Ascending aorta (tissue), 2 donors: ENCODE measurements at regions of chr16 and their contacts with region 1.

Region 1: GRCh38 chr16:27235055-27235937 is 32.0 kb downstream of the KDM8 start:
- DNase-seq: peak; percentile 71 to 88
- H3K4me3 ChIP-seq: peak overlapping the region in 1 of 2 donors; percentile 0
- H3K27ac ChIP-seq: peak overlapping the region; percentile 58 to 68
- H3K4me1 ChIP-seq: peaks cover 0 to 11% of the 10 kb centered on the region in 2 donors
- H3K27me3 ChIP-seq: no peaks in the 10 kb centered on the region
- CTCF ChIP-seq: peak; percentile 71 to 82 (median 74)

Region 2: GRCh38 chr16:27217256-27217655 is 18.0 kb before region 1 on chr16:
- intact Hi-C with region 1: no loop called
- DNase-seq: no peak
- H3K4me3 ChIP-seq: peak overlapping the region in 1 of 2 donors; percentile 37
- H3K27ac ChIP-seq: peak overlapping the region; percentile 12 to 49
- H3K4me1 ChIP-seq: no peaks in the 10 kb centered on the region
- H3K27me3 ChIP-seq: no peaks in the 10 kb centered on the region
- CTCF ChIP-seq: no peak

Region 3: GRCh38 chr16:27273670-27274423 is 38.6 kb after region 1 on chr16:
- intact Hi-C with region 1: loop called (anchors 5 kb)
- DNase-seq: no peak
- H3K4me3 ChIP-seq: no peak overlapping the region
- H3K27ac ChIP-seq: no peak overlapping the region
- H3K4me1 ChIP-seq: peaks cover 0 to 7% of the 10 kb centered on the region in 2 donors
- H3K27me3 ChIP-seq: no peaks in the 10 kb centered on the region
- CTCF ChIP-seq: no peak

Region 4: DNA sequence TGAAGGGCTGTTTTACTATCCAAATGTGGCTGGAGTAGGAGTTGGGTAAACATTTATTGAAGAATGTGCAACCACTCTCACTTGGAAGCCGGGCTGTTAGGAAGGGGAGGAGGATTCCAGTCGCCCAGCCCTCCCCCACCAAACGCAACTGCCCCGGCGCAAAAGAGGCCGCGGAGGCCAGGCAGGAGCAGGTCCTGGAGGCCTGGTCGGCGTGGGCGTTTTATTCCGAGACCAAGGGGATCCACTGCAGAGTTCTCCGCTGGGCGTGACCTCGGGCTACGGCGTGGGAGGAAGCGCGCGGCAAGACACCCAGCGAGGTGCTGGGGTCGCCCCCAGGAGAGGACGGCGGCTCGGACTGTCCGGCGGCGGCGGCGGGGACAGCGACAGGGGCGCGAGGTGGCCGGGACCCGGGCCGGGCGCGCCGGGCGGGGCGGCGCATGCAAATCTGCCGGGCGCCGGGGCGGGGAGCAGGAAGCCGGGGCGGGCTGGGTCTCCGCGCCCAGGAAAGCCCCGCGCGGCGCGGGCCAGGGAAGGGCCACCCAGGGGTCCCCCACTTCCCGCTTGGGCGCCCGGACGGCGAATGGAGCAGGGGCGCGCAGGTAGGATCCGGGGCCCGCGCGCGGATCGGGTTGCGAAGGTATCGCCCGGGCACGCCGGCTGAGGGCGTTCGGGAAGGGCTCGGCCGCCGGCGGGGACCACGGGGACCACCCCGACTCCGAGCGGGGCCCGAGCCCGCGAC is 78.3 kb after region 1 on chr16 and contains the start of gene IL4R:
- intact Hi-C with region 1: loop called (anchors 5 kb)
- DNase-seq: peak; percentile 31 to 89
- H3K4me3 ChIP-seq: peak within 1 kb of the TSS; percentile 85 to 90
- H3K27ac ChIP-seq: peak within 1 kb of the TSS; percentile 93 to 98
- H3K4me1 ChIP-seq: peaks cover 3 to 18% of the 10 kb centered on the region in 2 donors
- H3K27me3 ChIP-seq: no peaks in the 10 kb centered on the region
- CTCF ChIP-seq: no peak
- total RNA-seq, gene IL4R: 88.7 TPM

Region 5: DNA sequence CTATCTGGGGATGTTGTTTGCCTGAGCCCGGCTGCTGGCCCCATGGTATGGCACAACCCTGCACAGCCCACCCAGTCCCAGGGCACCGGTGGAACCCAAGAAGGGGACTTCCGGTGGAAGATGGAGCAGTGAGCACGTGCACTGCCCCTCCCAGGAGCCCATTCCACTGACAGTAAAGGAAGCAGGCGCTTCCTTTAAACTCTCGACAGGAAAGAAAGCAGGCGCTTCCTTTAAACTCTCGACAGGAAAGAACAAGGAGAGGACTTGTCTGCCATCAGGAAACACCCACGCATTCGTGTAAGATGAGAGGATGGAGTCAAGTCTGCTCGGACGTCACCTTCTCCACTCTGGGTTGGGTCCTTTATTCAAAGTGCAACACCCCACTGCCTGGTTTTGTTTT is 220.4 kb after region 1 on chr16:
- intact Hi-C with region 1: loop called (anchors 2 kb)
- DNase-seq: no peak
- H3K4me3 ChIP-seq: no peak overlapping the region
- H3K27ac ChIP-seq: no peak overlapping the region
- H3K4me1 ChIP-seq: no peaks in the 10 kb centered on the region
- H3K27me3 ChIP-seq: no peaks in the 10 kb centered on the region
- CTCF ChIP-seq: no peak